ENCODE measurements at regions of chr11 and their contacts with region 1.

Region 1: GRCh38 chr11:66579017-66579606 is 10.7 kb upstream of the CTSF start:
- DNase-seq: peak; percentile 63 to 74 (median 66)
- H3K4me3 ChIP-seq: no peak overlapping the region
- H3K27ac ChIP-seq: no peak overlapping the region
- H3K4me1 ChIP-seq: peaks cover 0 to 3% (median 0%) of the 10 kb centered on the region in 4 experiments
- H3K27me3 ChIP-seq: no peaks in the 10 kb centered on the region

Region 2: GRCh38 chr11:66466225-66467027 is 112.7 kb before region 1 on chr11 and contains the start of gene PELI3:
- CTCF ChIA-PET with region 1: no interaction called
- POLR2A ChIA-PET with region 1: no interaction called
- DNase-seq: peak; percentile 90 to 95 (median 93)
- H3K4me3 ChIP-seq: peak within 1 kb of the TSS; percentile 42 to 83 (median 65)
- H3K27ac ChIP-seq: peak within 1 kb of the TSS in 1 of 2 experiments; percentile 58
- H3K4me1 ChIP-seq: peaks cover 0 to 26% (median 22%) of the 10 kb centered on the region in 4 experiments
- H3K27me3 ChIP-seq: peaks cover 0 to 2% (median 0%) of the 10 kb centered on the region in 5 experiments

Region 3: GRCh38 chr11:66562907-66563583 is 16.1 kb before region 1 on chr11:
- CTCF ChIA-PET with region 1: interaction called, 14 read pairs
- POLR2A ChIA-PET with region 1: interaction called, 3 read pairs
- DNase-seq: no peak
- H3K4me3 ChIP-seq: no peak overlapping the region
- H3K27ac ChIP-seq: no peak overlapping the region
- H3K4me1 ChIP-seq: peaks cover 0 to 10% (median 6%) of the 10 kb centered on the region in 4 experiments
- H3K27me3 ChIP-seq: peaks cover 0 to 12% (median 4%) of the 10 kb centered on the region in 5 experiments

Region 4: DNA sequence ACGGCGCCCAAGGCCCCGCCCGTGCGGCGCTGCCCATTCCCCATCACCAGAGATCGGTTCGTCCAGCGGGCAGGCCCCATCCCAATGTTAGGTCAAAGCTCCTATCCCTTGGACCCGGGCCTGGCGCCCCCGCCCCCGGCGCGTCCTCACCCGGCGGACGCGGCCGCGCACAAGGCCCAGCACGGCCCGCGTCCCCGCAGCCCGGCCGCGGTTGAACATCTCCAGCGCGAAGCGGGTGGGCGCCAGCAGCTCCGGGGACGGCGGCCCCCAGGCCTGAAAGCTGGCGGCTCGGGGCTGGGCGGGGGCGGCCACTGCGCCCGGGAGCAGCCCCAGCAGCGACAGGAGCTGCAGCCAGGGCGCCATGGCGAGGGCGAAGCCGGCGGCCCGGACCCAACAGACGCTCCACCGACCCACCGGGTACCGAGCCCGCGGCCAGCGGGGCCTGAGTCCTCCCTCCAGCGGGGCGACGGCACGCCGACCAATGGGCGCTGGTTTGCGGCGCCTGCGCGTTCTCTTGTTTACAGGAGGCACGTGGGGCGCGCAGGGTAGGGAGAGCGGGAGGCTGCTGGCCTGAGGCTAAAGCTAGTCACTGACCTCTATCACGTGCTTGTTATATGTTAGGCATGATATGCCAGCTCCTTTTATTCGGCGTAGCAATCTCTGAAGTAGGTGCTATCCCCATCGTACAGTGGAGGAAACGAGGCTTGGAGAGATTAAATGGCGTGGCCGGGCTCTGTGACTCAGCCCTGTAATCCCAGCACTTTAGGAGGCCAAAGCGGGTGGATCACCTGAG is 10.8 kb before region 1 on chr11 and contains the start of gene CTSF:
- CTCF ChIA-PET with region 1: interaction called, 14 read pairs
- POLR2A ChIA-PET with region 1: no interaction called
- DNase-seq: peak; percentile 57 to 74 (median 63)
- H3K4me3 ChIP-seq: peak within 1 kb of the TSS; percentile 37 to 77 (median 61)
- H3K27ac ChIP-seq: no peak within 1 kb of the TSS
- H3K4me1 ChIP-seq: peaks cover 0 to 14% (median 10%) of the 10 kb centered on the region in 4 experiments
- H3K27me3 ChIP-seq: peaks cover 0 to 2% (median 0%) of the 10 kb centered on the region in 5 experiments

Region 5: GRCh38 chr11:66592457-66593302 is 13.6 kb after region 1 on chr11 and contains the starts of genes CCDC87 and CCS:
- CTCF ChIA-PET with region 1: interaction called, 55 read pairs
- POLR2A ChIA-PET with region 1: no interaction called
- DNase-seq: peak; percentile 97 to 98 (median 97)
- H3K4me3 ChIP-seq: peak within 1 kb of the TSS; percentile 49 to 96 (median 85)
- H3K27ac ChIP-seq: peak within 1 kb of the TSS; percentile 85 to 88
- H3K4me1 ChIP-seq: peaks cover 8 to 42% (median 35%) of the 10 kb centered on the region in 4 experiments
- H3K27me3 ChIP-seq: no peaks in the 10 kb centered on the region

Region 6: GRCh38 chr11:66643745-66644437 is 64.8 kb after region 1 on chr11:
- CTCF ChIA-PET with region 1: interaction called, 11 read pairs
- POLR2A ChIA-PET with region 1: no interaction called
- DNase-seq: no peak
- H3K4me3 ChIP-seq: no peak overlapping the region
- H3K27ac ChIP-seq: no peak overlapping the region
- H3K4me1 ChIP-seq: peaks cover 27 to 45% (median 35%) of the 10 kb centered on the region in 4 experiments
- H3K27me3 ChIP-seq: no peaks in the 10 kb centered on the region

Region 7: DNA sequence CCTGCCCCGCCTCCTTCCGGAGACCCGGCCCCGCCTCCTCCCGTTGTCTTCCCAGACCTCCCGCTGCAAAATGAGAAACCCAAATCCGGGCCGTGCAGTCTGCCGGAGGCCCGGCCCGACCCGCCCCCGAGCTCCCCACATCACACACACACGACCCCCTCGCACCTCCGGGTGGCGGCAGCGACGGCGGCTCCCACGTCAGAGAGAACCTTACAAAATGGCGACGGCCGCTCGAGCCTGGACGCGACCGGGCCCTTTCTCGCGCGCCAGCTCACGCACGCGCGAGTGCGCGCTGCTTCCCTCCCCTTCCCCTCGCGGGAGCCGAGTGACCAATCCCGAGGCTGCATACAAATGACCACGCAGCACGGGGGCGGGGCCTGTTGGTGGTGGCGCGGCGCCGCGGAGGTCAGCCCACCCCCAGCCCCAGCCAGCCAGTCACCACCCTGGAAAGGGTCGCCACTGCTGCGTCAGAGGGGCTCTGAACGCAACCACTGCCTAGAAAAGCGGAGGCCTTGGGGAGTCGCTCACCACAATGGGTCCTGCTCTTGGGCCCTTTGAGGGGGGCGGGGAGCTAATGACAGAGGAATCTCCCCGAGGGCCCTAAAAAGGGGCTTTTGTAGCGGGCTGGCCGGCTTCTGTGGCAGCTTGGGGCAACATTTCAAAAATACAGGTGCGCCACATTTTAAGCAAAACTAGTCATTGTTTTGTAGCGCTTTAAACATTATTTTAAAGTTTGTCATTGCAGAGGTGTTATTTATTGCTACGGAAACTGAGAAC is 98.7 kb after region 1 on chr11 and contains the start of gene RBM4B:
- CTCF ChIA-PET with region 1: interaction called, 31 read pairs
- POLR2A ChIA-PET with region 1: interaction called, 4 read pairs
- DNase-seq: peak; percentile 97 to 99 (median 99)
- H3K4me3 ChIP-seq: peak within 1 kb of the TSS; percentile 64 to 94 (median 83)
- H3K27ac ChIP-seq: peak within 1 kb of the TSS; percentile 94 to 96
- H3K4me1 ChIP-seq: peaks cover 13 to 37% (median 30%) of the 10 kb centered on the region in 4 experiments
- H3K27me3 ChIP-seq: no peaks in the 10 kb centered on the region

Measured in common myeloid progenitor, CD34-positive (primary cell).